ENCODE measurements at regions of chr1 and their contacts with region 1.

Region 1: DNA sequence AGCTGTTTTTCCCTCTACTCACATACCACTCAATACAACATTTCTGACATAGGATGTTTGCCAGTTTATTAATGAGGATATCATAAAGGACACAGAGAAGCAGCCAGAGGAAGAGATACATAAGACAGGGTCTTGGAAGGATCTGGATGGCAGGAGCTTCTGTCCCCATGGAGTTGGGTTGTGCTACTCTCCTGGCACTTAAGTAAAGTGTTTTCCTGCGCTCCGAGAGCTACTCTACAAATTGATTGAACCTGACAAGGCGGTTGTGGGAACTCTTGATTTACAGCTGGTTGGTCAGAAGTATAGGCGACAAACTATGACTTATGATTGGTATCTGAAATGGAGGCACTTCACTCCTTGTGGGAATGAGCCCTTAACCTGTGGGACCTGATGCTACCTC is 208.8 kb downstream of the HMCN1 start:
- DNase-seq: no peak
- ATAC-seq: no peak
- H3K4me3 ChIP-seq: no peak overlapping the region
- H3K4me3 Mint-ChIP-seq: no peak overlapping the region
- H3K27ac ChIP-seq: no peak overlapping the region
- H3K27ac Mint-ChIP-seq: no peak overlapping the region
- H3K4me1 ChIP-seq: no peaks in the 10 kb centered on the region
- H3K4me1 Mint-ChIP-seq: no peaks in the 10 kb centered on the region
- H3K27me3 ChIP-seq: peaks cover 0 to 2% of the 10 kb centered on the region in 2 experiments
- H3K27me3 Mint-ChIP-seq: peaks cover 4% of the 10 kb centered on the region
- CTCF ChIP-seq: no peak

Region 2: DNA sequence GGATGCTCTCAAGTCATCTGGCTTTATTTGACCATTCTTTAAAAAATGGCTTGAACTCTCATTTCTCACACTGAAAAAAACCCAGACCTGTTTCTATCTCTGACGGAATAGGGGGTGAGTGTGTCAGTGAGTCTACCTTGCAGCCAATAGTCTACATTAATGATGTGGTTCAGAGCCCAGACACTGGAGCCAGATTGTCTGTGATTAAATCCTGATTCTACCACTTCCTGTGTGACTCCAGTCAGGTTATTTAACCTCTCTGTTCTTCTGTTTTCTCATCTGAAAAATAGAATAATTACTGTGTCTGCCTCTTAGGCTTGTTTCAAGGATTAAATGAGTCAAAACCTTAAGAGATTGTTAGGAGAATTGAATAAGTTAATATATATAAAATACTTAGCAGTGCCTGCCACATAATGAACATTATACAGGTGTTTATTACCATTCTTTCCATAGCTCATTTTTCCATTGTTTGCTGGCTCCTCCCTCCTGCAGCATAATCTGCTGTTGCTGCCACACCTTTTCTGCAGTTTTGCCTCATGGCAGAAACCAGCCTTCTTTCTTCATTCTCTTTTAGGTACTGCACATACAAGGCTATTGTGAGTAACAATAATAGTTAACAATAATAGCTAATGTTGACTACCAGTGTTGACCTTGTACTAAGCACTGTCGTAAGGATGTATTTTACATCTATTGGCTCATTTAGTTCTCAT is 468.4 kb before region 1 on chr1:
- CTCF ChIA-PET with region 1: no interaction called
- POLR2A ChIA-PET with region 1: no interaction called
- intact Hi-C with region 1: no loop called
- DNase-seq: peak in 3 of 9 experiments; percentile 21 to 59 (median 24)
- ATAC-seq: peak; percentile 76
- H3K4me3 ChIP-seq: no peak overlapping the region
- H3K4me3 Mint-ChIP-seq: no peak overlapping the region
- H3K27ac ChIP-seq: no peak overlapping the region
- H3K27ac Mint-ChIP-seq: no peak overlapping the region
- H3K4me1 ChIP-seq: no peaks in the 10 kb centered on the region
- H3K4me1 Mint-ChIP-seq: peaks cover 6% of the 10 kb centered on the region
- H3K27me3 ChIP-seq: no peaks in the 10 kb centered on the region
- H3K27me3 Mint-ChIP-seq: no peaks in the 10 kb centered on the region
- CTCF ChIP-seq: no peak

Region 3: GRCh38 chr1:185961664-185962063 is 18.7 kb after region 1 on chr1:
- CTCF ChIA-PET with region 1: no interaction called
- POLR2A ChIA-PET with region 1: no interaction called
- intact Hi-C with region 1: loop called in 1 of 2 experiments (anchors 2 kb)
- DNase-seq: no peak
- ATAC-seq: no peak
- H3K4me3 ChIP-seq: no peak overlapping the region
- H3K4me3 Mint-ChIP-seq: no peak overlapping the region
- H3K27ac ChIP-seq: no peak overlapping the region
- H3K27ac Mint-ChIP-seq: no peak overlapping the region
- H3K4me1 ChIP-seq: no peaks in the 10 kb centered on the region
- H3K4me1 Mint-ChIP-seq: no peaks in the 10 kb centered on the region
- H3K27me3 ChIP-seq: no peaks in the 10 kb centered on the region
- H3K27me3 Mint-ChIP-seq: peaks cover 4% of the 10 kb centered on the region
- CTCF ChIP-seq: no peak

Measured in CD8-positive, alpha-beta T cell (primary cell).